ENCODE measurements at regions of chr21 and their contacts with region 1.

Region 1: GRCh38 chr21:37675202-37675801 is 241.0 kb downstream of the KCNJ6 start:
- DNase-seq: peak; percentile 48
- H3K4me3 ChIP-seq: no peak overlapping the region
- H3K27ac ChIP-seq: no peak overlapping the region
- H3K4me1 ChIP-seq: peaks cover 3% of the 10 kb centered on the region
- H3K27me3 ChIP-seq: peaks cover 4 to 13% of the 10 kb centered on the region in 2 experiments
- CTCF ChIP-seq: peak; percentile 95 to 96
- POLR2A ChIP-seq: no peak

Region 2: DNA sequence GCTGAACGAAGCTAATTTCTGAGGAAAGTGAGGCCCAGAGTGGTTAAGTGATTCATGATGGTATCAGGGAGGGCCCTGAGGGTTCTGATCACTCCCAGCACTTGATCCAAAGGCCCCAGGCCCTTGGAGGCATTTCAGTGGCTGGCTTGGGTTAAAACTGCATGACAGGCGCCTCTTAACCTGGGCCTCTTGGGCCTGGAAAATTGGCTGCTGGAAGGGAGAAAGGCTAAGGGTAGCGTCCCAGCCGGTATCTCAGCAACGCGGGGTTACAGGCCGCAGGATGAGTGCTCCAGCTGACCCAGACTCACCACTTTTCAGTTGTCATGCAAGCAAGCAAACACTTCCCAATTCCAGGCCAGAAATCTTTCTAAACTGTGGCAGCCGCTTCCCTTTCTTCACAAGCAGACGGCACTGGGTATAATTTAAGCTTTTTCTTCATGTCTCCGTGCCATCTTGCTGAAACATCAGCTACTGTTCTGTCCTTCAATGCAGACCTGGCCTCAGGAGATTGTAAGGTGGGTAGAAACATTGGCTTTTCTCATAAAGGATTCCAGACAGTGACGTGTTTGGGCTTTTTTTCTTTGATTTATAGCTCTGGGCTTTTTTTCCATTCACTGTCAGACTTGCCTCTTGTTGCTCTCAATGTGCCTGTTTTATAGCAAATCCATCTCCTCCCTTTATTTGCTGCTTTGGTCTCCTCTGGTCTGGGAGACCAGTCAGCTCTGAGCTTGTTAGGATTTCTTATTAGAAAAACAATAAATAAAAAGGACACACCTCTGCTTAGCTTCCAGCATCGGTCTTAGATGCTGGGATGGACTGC is 11.9 kb after region 1 on chr21:
- CTCF ChIA-PET with region 1: interaction called, 13 read pairs
- POLR2A ChIA-PET with region 1: no interaction called
- dilution Hi-C with region 1: no loop called
- intact Hi-C with region 1: no loop called
- DNase-seq: no peak
- H3K4me3 ChIP-seq: no peak overlapping the region
- H3K27ac ChIP-seq: no peak overlapping the region
- H3K4me1 ChIP-seq: no peaks in the 10 kb centered on the region
- H3K27me3 ChIP-seq: peaks cover 8 to 14% of the 10 kb centered on the region in 2 experiments
- CTCF ChIP-seq: no peak
- POLR2A ChIP-seq: no peak

Measured in endothelial cell of umbilical vein (primary cell).